Psoas muscle (tissue), 8 donors: ENCODE measurements at regions of chr1 and their contacts with region 1.

Region 1: DNA sequence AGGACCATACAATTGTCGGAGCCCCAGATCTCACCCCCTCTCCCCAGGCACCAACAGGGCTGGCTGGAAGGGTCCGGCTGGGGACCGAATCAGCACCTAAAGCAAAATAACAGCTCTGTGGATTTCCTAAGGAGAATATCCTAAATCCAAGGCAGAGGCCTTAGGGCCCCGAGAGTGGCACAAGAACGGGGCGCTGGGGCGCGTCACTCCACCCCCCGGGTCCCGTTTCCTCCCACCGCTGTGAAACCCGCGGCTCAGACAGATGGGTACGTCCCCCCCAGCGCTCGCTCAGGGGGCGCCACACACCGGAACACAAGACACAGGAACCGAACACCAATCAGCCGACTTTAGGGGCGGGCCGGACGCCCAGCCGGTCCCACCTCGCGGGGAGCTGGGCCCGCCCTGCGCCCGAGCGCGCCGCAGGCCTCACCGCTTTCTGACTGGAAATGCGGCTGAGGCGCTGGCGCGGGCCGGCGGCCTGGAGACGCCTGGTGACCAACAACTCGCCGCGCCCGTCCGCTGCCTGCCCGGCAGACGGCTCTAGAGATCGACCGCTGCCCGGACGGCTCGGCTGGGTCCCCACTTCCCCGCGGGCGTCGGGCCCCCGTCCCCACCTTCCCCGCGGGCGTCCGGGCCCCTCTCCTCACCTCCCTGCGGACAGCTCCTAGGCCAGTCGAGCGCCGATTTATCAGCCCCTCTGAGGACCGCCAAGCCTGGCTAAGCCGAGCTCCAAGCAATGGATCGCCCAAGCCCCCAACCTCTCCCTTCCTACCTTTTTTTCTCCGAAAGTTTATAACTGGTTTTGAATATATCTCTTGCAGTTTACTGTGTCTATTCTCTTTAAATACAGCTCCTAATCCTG is at the start of gene HFM1:
- DNase-seq: peak; percentile 85 to 88
- ATAC-seq: peak; percentile 96 to 98 (median 98)
- H3K4me3 ChIP-seq: peak within 1 kb of the TSS; percentile 85
- H3K27ac ChIP-seq: peak within 1 kb of the TSS; percentile 95
- H3K4me1 ChIP-seq: peaks cover 3% of the 10 kb centered on the region
- H3K27me3 ChIP-seq: peaks cover 0 to 3% (median 0%) of the 10 kb centered on the region in 3 donors
- CTCF ChIP-seq: no peak
- total RNA-seq, gene HFM1: 1.3 to 3.1 (median 1.9) TPM

Region 2: DNA sequence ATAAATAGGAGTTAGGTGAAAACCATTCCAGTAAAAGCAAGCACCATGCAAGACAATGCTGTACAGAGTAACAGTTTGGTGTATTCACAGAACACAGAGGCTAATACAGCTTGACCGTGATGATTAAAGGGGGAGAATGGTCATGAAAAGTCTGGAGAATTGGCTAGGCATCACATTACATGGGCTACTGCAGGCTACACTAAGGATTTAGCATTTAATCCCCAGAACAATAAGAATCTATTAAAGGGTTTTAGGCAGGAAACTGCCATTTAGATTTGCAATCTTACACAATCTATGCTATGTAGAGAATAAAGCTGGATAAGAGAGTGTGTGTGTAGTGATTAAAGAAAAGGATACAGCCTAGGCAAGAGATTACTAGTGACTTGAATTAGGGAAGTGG is 30.3 kb before region 1 on chr1:
- intact Hi-C with region 1: no loop called
- DNase-seq: no peak
- ATAC-seq: no peak
- H3K4me3 ChIP-seq: no peak overlapping the region
- H3K27ac ChIP-seq: no peak overlapping the region
- H3K4me1 ChIP-seq: no peaks in the 10 kb centered on the region
- H3K27me3 ChIP-seq: no peaks in the 10 kb centered on the region
- CTCF ChIP-seq: no peak

Region 3: GRCh38 chr1:91924146-91924545 is 519.8 kb after region 1 on chr1:
- intact Hi-C with region 1: loop called in 1 of 2 experiments (anchors 10 kb)
- DNase-seq: no peak
- ATAC-seq: no peak
- H3K4me3 ChIP-seq: no peak overlapping the region
- H3K27ac ChIP-seq: no peak overlapping the region
- H3K4me1 ChIP-seq: no peaks in the 10 kb centered on the region
- H3K27me3 ChIP-seq: no peaks in the 10 kb centered on the region
- CTCF ChIP-seq: no peak